Caco-2 (cell line): ENCODE measurements at regions of chr12 and their contacts with region 1.

Region 1: GRCh38 chr12:52884526-52885293 is 20.2 kb downstream of the KRT8 start:
- DNase-seq: peak; percentile 89 to 92
- H3K4me3 ChIP-seq: peak overlapping the region; percentile 15; the same call in 1 of the 2 replicates
- H3K4me3 Mint-ChIP-seq: peak overlapping the region; percentile 68
- H3K27ac Mint-ChIP-seq: peak overlapping the region; percentile 95
- H3K4me1 ChIP-seq: peaks cover 55% of the 10 kb centered on the region
- H3K4me1 Mint-ChIP-seq: peaks cover 22% of the 10 kb centered on the region
- H3K27me3 ChIP-seq: no peaks in the 10 kb centered on the region
- H3K27me3 Mint-ChIP-seq: no peaks in the 10 kb centered on the region
- CTCF ChIP-seq: peak; percentile 93 to 97

Region 2: GRCh38 chr12:52063981-52064649 is 820.6 kb before region 1 on chr12:
- CTCF ChIA-PET with region 1: no interaction called
- POLR2A ChIA-PET with region 1: no interaction called
- intact Hi-C with region 1: no loop called
- DNase-seq: no peak
- H3K4me3 ChIP-seq: no peak overlapping the region
- H3K4me3 Mint-ChIP-seq: no peak overlapping the region
- H3K27ac Mint-ChIP-seq: no peak overlapping the region
- H3K4me1 ChIP-seq: no peaks in the 10 kb centered on the region
- H3K4me1 Mint-ChIP-seq: no peaks in the 10 kb centered on the region
- H3K27me3 ChIP-seq: no peaks in the 10 kb centered on the region
- H3K27me3 Mint-ChIP-seq: no peaks in the 10 kb centered on the region
- CTCF ChIP-seq: no peak

Region 3: GRCh38 chr12:52895061-52895887 is 10.6 kb after region 1 on chr12:
- CTCF ChIA-PET with region 1: interaction called, 15 read pairs
- POLR2A ChIA-PET with region 1: interaction called, 7 read pairs
- intact Hi-C with region 1: no loop called
- DNase-seq: peak; percentile 88 to 93
- H3K4me3 ChIP-seq: no peak overlapping the region
- H3K4me3 Mint-ChIP-seq: peak overlapping the region; percentile 45
- H3K27ac Mint-ChIP-seq: peak overlapping the region; percentile 83
- H3K4me1 ChIP-seq: peaks cover 53% of the 10 kb centered on the region
- H3K4me1 Mint-ChIP-seq: peaks cover 39% of the 10 kb centered on the region
- H3K27me3 ChIP-seq: no peaks in the 10 kb centered on the region
- H3K27me3 Mint-ChIP-seq: peaks cover 2% of the 10 kb centered on the region
- CTCF ChIP-seq: no peak

Region 4: GRCh38 chr12:52949413-52950331 is 65.0 kb after region 1 on chr12:
- CTCF ChIA-PET with region 1: interaction called, 11 read pairs
- POLR2A ChIA-PET with region 1: interaction called, 8 read pairs
- intact Hi-C with region 1: loop called (anchors 1 kb)
- DNase-seq: peak; percentile 77 to 83
- H3K4me3 ChIP-seq: peak overlapping the region; percentile 72
- H3K4me3 Mint-ChIP-seq: peak overlapping the region; percentile 89
- H3K27ac Mint-ChIP-seq: peak overlapping the region; percentile 99
- H3K4me1 ChIP-seq: peaks cover 50% of the 10 kb centered on the region
- H3K4me1 Mint-ChIP-seq: peaks cover 29% of the 10 kb centered on the region
- H3K27me3 ChIP-seq: no peaks in the 10 kb centered on the region
- H3K27me3 Mint-ChIP-seq: no peaks in the 10 kb centered on the region
- CTCF ChIP-seq: no peak

Region 5: DNA sequence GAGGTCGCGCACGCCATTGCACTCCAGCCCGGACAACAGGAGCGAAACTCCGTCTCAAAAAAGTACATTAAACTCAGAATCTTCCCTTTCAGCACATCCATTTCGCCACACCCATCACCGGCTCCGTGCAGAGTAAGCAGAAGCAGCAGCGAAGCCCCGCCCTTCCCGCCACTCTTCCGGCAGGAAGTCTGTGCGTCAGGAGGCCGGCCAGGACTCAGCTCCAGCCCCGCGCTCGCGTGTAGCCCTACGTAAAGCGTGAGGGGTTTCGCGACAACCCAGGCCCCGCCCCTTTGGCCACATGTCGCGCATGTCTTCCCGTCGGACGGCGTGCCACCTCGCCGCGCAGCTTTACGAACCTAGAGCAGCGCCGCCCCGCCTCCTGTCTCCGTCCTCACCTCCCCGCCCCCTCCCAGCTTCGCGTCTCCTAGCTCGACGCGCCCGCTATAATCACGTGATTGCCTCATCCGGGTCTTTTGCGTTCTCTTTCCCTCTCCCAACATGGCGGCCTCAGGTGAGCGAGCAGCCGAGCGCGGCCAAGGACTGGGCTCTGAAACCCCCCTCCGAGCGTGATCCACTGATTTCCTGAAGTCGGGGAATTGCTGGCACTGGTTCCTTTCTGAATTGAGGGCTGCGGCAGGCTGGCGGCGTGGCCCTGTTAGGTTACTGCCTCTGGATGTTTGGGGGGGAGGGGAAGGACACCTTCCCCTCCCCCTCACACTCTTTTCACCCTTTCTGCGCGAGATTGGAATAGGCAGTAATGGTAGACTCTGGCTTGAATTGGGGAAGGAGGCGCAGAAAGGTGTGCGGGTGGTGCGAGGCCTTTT is 121.5 kb after region 1 on chr12 and contains the start of gene EIF4B:
- CTCF ChIA-PET with region 1: interaction called, 10 read pairs
- POLR2A ChIA-PET with region 1: interaction called, 5 read pairs
- intact Hi-C with region 1: no loop called
- DNase-seq: peak; percentile 99 to 100
- H3K4me3 ChIP-seq: peak within 1 kb of the TSS; percentile 98
- H3K4me3 Mint-ChIP-seq: peak within 1 kb of the TSS; percentile 97
- H3K27ac Mint-ChIP-seq: peak within 1 kb of the TSS; percentile 99
- H3K4me1 ChIP-seq: peaks cover 44% of the 10 kb centered on the region
- H3K4me1 Mint-ChIP-seq: peaks cover 24% of the 10 kb centered on the region
- H3K27me3 ChIP-seq: no peaks in the 10 kb centered on the region
- H3K27me3 Mint-ChIP-seq: no peaks in the 10 kb centered on the region
- CTCF ChIP-seq: no peak
- total RNA-seq, gene EIF4B: 445 and 452 TPM in 2 replicates